HCT116 (cell line): ENCODE measurements at regions of chr18 and their contacts with region 1.

Region 1: DNA sequence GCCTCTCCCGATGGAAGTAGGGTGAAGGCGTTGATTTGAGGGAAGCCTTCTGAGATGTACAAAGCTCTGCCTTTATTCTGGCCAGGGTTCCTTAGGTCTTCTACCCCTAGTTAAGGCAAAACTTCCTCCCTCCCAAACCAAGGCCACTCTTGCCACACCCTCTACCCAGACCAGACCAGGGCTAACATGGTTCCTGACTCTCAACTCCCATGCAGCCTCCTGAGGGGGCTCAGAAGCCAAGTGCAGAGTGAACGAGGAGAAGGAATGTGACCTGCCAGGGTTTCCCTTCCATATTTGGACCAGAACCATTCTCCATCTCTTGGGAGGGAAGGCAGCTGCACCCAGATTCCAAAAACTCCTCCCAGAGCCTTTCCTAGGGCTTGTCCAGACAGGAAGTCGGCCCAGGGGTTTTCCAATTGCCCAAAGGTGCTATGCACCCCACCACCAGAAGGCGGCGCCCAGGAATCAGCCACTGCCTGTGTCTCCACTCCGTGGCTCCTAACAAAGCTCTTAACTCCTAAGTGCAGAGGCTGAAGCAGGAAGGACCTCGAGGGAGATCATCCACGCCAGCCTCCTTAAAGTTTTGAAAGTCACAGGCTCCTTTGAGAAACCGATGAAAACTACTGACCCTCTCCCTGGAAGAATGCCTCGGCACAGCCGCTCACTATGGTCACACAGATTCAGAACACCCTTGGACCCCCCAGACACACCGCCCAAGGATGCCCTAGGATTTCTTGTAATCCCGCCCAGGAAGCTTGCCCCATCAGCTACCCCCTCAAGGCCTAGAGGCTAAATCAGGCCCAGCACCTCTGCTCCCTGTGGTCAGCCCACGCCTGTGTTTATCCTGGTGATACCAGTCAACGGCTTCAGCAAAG is 157.8 kb downstream of the SMAD2 start:
- DNase-seq: peak; percentile 60
- ATAC-seq: peak; percentile 96
- H3K4me3 ChIP-seq: no peak overlapping the region
- H3K27ac ChIP-seq: 0 out of 2 replicates have a peak overlapping the region, but pooled peaks have one; percentile 26
- H3K4me1 ChIP-seq: peaks cover 0 to 6% of the 10 kb centered on the region in 2 experiments; a peak in 3 of 4 replicates
- H3K27me3 ChIP-seq: no peaks in the 10 kb centered on the region
- CTCF ChIP-seq: peak; percentile 79 to 96 (median 91)
- POLR2A ChIP-seq: no peak
- RAD21 ChIP-seq: peak; percentile 92

Region 2: DNA sequence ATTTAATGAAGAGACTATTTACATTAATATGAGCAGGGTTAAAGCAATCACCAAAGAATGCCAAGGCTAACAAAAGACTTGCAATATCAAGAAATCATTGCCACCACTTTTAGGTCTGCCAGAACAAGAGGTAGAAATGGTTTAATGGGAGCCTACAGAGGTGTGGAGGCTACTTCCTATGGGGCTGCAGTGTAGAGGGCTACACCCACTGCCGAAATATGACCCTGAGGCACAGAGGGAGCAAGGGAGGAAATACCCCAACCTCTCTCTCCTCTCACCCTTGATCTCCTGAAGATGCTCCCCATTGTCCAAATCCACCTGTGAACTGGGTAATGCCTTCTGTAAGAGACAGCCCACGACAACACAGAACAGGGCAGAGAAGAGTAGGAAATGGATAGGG is 157.6 kb before region 1 on chr18:
- CTCF ChIA-PET with region 1: no interaction called
- POLR2A ChIA-PET with region 1: no interaction called
- RAD21 ChIA-PET with region 1: no interaction called
- intact Hi-C with region 1: no loop called
- DNase-seq: no peak
- ATAC-seq: no peak
- H3K4me3 ChIP-seq: no peak overlapping the region
- H3K27ac ChIP-seq: no peak overlapping the region
- H3K4me1 ChIP-seq: no peaks in the 10 kb centered on the region
- H3K27me3 ChIP-seq: peaks cover 5% of the 10 kb centered on the region; the same call in 1 of the 2 replicates
- CTCF ChIP-seq: no peak
- POLR2A ChIP-seq: no peak
- RAD21 ChIP-seq: no peak

Region 3: DNA sequence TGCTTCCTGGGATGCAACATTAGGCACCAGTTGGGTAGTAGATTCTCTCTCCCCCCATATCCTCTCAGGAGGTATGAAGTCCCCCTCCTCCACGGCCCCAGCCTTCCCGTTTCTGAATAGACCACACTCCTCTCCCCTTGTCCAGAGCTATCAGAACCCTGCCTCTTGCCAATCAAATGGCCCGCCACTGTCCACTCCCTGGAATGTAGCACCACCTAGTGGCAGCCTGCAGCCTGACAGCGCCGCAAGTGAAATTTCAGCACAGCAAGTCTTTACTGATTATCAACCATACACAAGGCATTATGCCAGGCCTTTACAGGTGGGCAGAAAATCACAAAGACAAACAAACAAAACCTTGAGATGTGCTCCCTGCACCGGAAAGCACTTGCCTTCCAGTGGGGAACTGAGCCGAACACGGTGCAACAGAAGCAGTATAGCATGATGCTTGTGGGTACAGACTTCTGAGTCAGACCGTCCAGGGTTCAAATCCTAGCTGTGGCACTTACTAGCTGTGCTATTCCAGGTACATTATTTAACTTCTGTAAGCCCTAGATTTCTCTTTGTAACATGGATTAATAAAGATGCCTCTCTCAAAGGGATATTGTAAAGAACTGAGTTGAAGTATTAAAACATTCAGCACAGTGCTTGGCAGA is 16.1 kb before region 1 on chr18:
- CTCF ChIA-PET with region 1: interaction called, 15 read pairs
- POLR2A ChIA-PET with region 1: no interaction called
- RAD21 ChIA-PET with region 1: no interaction called
- intact Hi-C with region 1: no loop called
- DNase-seq: peak; percentile 44
- ATAC-seq: peak; percentile 74
- H3K4me3 ChIP-seq: no peak overlapping the region
- H3K27ac ChIP-seq: no peak overlapping the region
- H3K4me1 ChIP-seq: peaks cover 0 to 6% of the 10 kb centered on the region in 2 experiments; a peak in 1 of 4 replicates
- H3K27me3 ChIP-seq: no peaks in the 10 kb centered on the region
- CTCF ChIP-seq: peak; percentile 67 to 98 (median 97)
- POLR2A ChIP-seq: no peak
- RAD21 ChIP-seq: peak; percentile 73

Region 4: GRCh38 chr18:48002933-48003365 is 230.3 kb after region 1 on chr18:
- CTCF ChIA-PET with region 1: interaction called, 3 read pairs
- POLR2A ChIA-PET with region 1: no interaction called
- RAD21 ChIA-PET with region 1: interaction called in 1 of 2 experiments, 3 read pairs
- intact Hi-C with region 1: loop called (anchors 5 kb)
- DNase-seq: peak; percentile 77
- ATAC-seq: peak; percentile 84
- H3K4me3 ChIP-seq: peak overlapping the region in 1 of 2 experiments; percentile 25; a peak in 1 of 4 replicates
- H3K27ac ChIP-seq: peak overlapping the region; percentile 62
- H3K4me1 ChIP-seq: peaks cover 30 to 38% of the 10 kb centered on the region in 2 experiments
- H3K27me3 ChIP-seq: no peaks in the 10 kb centered on the region
- CTCF ChIP-seq: no peak
- POLR2A ChIP-seq: no peak
- RAD21 ChIP-seq: no peak

Region 5: DNA sequence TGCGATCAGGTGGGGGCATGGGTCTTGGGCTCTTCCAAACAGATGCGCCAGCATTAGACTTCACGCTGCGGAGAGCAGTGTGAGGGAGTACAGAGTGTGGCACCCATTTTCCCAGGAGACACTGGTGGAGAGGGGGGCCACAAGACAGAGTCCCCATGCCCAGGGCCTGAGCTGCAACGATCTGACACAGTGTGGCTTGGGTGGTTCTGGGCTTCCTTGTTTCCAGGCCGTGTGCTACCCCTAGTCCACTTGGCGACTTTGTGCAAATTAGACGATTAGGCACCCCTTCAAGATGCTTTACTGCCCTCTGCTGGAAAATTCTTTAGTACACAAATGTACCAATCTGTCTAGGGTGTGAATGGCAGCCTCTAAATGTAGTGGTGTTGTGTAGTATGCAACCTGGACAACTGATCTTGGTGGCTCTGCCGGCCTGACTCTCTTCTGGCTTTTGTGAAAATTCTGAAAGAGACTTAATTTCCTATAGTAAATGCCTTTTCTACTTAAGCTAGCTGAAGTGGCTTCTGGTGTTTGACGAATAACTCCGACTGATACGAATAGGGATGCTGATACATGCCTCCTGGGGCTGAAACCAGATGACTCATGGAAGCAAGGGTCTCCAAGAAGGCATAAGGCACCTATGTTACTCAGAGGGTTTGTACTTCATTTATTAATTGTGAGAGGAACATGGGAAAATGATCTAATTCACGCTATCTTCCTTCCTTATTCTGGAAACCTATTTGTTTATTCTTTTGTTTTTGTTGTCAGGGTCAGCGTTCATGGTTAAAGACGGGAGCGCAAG is 250.1 kb after region 1 on chr18:
- CTCF ChIA-PET with region 1: interaction called, 7 read pairs
- POLR2A ChIA-PET with region 1: no interaction called
- RAD21 ChIA-PET with region 1: interaction called in 1 of 2 experiments, 3 read pairs
- intact Hi-C with region 1: loop called (anchors 1 kb)
- DNase-seq: peak; percentile 62
- ATAC-seq: peak; percentile 83
- H3K4me3 ChIP-seq: no peak overlapping the region
- H3K27ac ChIP-seq: no peak overlapping the region
- H3K4me1 ChIP-seq: peaks cover 4 to 8% of the 10 kb centered on the region in 2 experiments; a peak in 3 of 4 replicates
- H3K27me3 ChIP-seq: no peaks in the 10 kb centered on the region; the same call in 1 of the 2 replicates
- CTCF ChIP-seq: peak; percentile 51 to 81 (median 66); a peak in 5 of 6 replicates
- POLR2A ChIP-seq: no peak
- RAD21 ChIP-seq: peak; percentile 88